ENCODE measurements at regions of chr4 and their contacts with region 1.

Region 1: DNA sequence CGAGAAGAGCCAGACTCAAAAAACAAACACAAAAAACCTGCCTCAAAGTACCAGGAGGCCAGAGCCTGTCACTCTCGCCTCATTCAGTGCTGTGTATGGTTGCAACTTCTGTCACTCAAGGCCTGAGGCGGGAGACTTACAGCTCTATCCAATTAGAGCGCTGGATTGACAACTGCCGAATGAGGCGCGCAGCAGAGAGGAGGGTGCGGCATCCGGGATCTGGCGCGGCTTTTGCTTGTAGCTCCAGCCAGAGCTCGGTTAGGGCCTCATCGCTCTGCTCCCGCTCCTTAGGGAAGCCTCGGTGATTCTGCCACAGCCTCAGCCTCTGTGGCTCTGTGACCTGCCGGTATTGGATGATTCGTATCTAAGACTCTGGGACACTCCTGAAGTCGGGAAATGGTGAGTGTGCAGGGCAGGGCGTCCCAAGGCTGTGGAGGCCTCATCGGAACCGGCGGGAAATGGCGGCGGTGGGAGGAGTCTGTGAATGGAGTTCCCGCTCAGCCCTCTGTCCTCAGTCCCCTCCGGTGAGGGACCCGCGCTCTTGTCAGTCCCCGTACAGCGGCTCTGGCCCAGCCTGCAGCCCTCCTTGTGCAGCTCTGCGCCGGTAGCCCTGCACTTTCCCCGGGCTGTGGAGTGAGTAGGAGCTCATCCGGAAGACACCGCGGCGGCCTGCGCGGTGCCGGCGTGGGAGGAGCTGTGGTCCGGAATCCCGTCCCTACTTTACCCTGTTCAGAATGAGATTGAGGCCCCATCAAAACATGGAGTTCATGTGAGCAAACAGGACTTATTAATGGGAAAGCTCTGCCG is at the start of gene ZNF718:
- DNase-seq: peak; percentile 82 to 94 (median 91)
- H3K4me3 ChIP-seq: peak within 1 kb of the TSS; percentile 71 to 87
- H3K4me3 Mint-ChIP-seq: peak within 1 kb of the TSS; percentile 95 to 100 (median 98)
- H3K27ac ChIP-seq: peak within 1 kb of the TSS; percentile 69
- H3K27ac Mint-ChIP-seq: peak within 1 kb of the TSS; percentile 96 to 99 (median 97)
- H3K4me1 ChIP-seq: peaks cover 38% of the 10 kb centered on the region
- H3K4me1 Mint-ChIP-seq: peaks cover 22 to 49% (median 40%) of the 10 kb centered on the region in 4 donors
- H3K27me3 ChIP-seq: no peaks in the 10 kb centered on the region
- H3K27me3 Mint-ChIP-seq: no peaks in the 10 kb centered on the region
- total RNA-seq, gene ZNF718: 13.0 to 14.0 TPM

Region 2: DNA sequence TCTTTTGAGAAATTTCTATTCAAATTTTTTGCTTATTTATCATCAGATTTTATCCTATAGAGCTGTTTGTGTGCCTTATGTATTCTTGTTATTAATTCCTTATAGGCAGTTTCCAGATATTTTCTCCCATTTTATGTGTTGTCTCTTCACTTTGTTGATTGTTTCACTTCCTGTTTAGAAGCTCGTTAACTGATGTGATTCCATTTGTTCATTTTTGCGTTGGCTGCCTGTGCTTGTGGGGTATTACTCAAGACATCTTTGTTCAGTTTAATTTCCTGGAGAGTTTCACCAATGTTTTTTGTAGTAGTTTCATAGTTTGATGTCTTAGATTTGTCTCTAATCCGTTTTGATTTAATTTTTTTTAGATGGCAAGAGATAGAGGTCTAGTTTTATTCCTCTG is 14.5 kb after region 1 on chr4:
- CTCF ChIA-PET with region 1: interaction called, 8 read pairs
- POLR2A ChIA-PET with region 1: interaction called, 20 read pairs
- intact Hi-C with region 1: no loop called
- DNase-seq: no peak
- H3K4me3 ChIP-seq: no peak overlapping the region
- H3K4me3 Mint-ChIP-seq: peak overlapping the region in 1 of 8 donors; percentile 43
- H3K27ac ChIP-seq: no peak overlapping the region
- H3K27ac Mint-ChIP-seq: no peak overlapping the region
- H3K4me1 ChIP-seq: no peaks in the 10 kb centered on the region
- H3K4me1 Mint-ChIP-seq: peaks cover 0 to 15% (median 4%) of the 10 kb centered on the region in 4 donors
- H3K27me3 ChIP-seq: no peaks in the 10 kb centered on the region
- H3K27me3 Mint-ChIP-seq: no peaks in the 10 kb centered on the region

Region 3: GRCh38 chr4:337143-337931 is 212.9 kb after region 1 on chr4 and contains the start of gene ZNF141:
- CTCF ChIA-PET with region 1: no interaction called
- POLR2A ChIA-PET with region 1: interaction called, 10 read pairs
- intact Hi-C with region 1: loop called (anchors 5 kb)
- DNase-seq: peak; percentile 90 to 97 (median 94)
- H3K4me3 ChIP-seq: peak within 1 kb of the TSS; percentile 68 to 99
- H3K4me3 Mint-ChIP-seq: peak within 1 kb of the TSS; percentile 96 to 100 (median 99)
- H3K27ac ChIP-seq: peak within 1 kb of the TSS; percentile 78
- H3K27ac Mint-ChIP-seq: peak within 1 kb of the TSS; percentile 98 to 99 (median 99)
- H3K4me1 ChIP-seq: peaks cover 15% of the 10 kb centered on the region
- H3K4me1 Mint-ChIP-seq: peaks cover 19 to 54% (median 35%) of the 10 kb centered on the region in 4 donors
- H3K27me3 ChIP-seq: no peaks in the 10 kb centered on the region
- H3K27me3 Mint-ChIP-seq: peaks cover 0 to 3% of the 10 kb centered on the region in 2 donors
- total RNA-seq, gene ZNF141: 55.2 to 59.6 TPM